ENCODE measurements at regions of chr4 and their contacts with region 1.

Region 1: DNA sequence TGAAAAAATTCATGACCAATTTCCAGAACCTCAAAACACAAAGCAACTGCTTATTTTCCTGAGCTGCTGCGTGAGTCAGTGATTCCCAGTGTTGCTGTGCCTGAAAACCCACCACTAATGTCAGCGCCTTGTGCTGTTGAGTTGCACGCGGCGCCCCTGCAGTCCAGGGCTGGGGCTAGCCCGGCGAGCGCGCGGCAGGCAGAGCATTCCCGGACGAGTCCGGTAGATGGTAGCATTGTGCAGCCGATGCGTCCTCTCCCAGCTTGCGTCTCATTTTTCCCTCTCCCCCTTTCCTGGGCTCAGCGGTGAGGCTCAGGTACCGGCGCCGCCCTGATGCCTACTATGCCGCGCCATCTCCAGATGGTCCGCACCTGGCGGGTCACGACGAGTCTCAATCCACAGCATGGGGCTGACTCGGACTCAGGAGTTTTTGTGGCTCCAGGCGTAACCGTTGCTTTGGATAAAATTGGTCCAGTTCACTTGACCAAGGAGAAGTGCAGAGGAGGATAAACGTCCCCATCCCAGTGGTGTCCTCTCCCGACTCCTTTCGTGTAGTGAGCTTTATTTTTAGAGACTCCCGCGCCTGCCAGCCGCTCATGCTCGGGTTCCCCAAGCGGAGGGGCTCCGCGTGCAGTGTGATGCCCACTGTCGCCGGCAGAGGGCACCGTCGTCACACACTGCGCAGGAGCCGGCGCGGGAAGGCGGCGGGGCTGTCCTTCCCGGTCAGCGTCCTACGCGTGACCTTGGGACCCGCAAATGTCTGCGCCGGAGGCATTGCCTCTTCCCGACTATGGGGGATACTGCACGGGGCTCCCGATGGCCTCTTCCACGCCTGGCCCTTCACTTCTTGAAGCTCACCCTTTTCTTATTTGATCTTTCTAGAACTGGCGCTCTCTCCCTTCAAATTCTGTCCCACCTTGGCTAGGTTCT is 53.6 kb upstream of the IGFBP7 start:
- DNase-seq: peak; percentile 78 to 88
- H3K4me3 ChIP-seq: peak overlapping the region; percentile 69
- H3K4me3 Mint-ChIP-seq: peak overlapping the region; percentile 87
- H3K27ac Mint-ChIP-seq: no peak overlapping the region
- H3K4me1 ChIP-seq: no peaks in the 10 kb centered on the region
- H3K4me1 Mint-ChIP-seq: peaks cover 8% of the 10 kb centered on the region
- H3K27me3 ChIP-seq: no peaks in the 10 kb centered on the region
- H3K27me3 Mint-ChIP-seq: peaks cover 24% of the 10 kb centered on the region
- CTCF ChIP-seq: peak; percentile 86 to 90

Region 2: DNA sequence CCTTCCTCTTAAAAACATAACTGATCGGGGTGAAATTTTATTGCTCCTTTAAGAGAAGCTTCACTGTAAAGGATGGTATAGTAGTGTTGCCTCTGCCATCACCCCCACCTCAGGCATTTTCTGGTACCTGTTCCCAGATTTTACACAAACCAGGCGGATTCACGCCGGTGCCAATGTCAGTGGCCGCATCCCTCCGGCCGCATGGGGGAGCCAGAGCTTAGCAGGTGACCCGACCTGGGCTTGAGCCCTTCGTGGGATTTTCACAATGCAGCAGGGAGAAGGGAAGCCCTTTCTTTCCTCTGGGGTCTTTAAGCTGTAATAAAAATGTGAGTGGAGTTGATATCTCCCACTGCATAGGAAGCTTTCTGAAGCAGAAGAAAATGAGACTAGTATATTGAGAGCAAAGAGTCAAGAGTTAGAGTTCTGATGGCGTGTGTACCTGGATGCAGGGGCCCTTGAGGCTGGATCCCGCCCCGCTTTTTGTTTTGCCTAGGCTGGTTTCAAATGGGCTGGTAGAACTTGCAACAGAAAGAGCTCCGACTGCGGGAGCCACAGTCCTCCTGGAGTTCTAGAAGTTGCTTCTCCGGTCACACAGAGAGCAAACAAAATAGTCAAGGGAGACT is 125.7 kb before region 1 on chr4:
- CTCF ChIA-PET with region 1: interaction called, 20 read pairs
- POLR2A ChIA-PET with region 1: no interaction called
- intact Hi-C with region 1: loop called (anchors 1 kb)
- DNase-seq: peak; percentile 69 to 84
- H3K4me3 ChIP-seq: no peak overlapping the region
- H3K4me3 Mint-ChIP-seq: no peak overlapping the region
- H3K27ac Mint-ChIP-seq: no peak overlapping the region
- H3K4me1 ChIP-seq: no peaks in the 10 kb centered on the region; the same call in 1 of the 2 replicates
- H3K4me1 Mint-ChIP-seq: peaks cover 13% of the 10 kb centered on the region
- H3K27me3 ChIP-seq: no peaks in the 10 kb centered on the region
- H3K27me3 Mint-ChIP-seq: no peaks in the 10 kb centered on the region
- CTCF ChIP-seq: peak; percentile 91 to 97

Region 3: DNA sequence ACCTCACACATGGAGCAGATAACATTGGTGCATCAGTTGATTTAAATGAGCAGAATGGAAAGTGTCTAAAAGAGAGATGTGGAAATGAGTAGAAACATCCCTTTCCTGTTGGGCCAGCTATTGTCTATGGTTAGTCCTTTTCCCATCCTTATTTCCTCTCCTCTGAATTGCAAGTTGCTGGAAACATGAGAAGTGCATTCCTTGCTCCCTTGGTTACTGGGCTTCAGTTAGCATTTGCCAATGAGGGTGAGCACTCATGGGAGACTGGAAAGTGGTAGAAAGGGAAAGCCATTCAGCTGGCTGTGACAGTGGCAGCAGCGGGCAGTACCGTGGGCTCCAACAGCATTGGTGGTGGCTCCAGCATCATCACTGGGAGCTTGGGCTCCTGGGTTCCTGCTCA is 42.4 kb after region 1 on chr4:
- CTCF ChIA-PET with region 1: no interaction called
- POLR2A ChIA-PET with region 1: no interaction called
- intact Hi-C with region 1: loop called (anchors 5 kb)
- DNase-seq: no peak
- H3K4me3 ChIP-seq: no peak overlapping the region
- H3K4me3 Mint-ChIP-seq: no peak overlapping the region
- H3K27ac Mint-ChIP-seq: no peak overlapping the region
- H3K4me1 ChIP-seq: no peaks in the 10 kb centered on the region
- H3K4me1 Mint-ChIP-seq: no peaks in the 10 kb centered on the region
- H3K27me3 ChIP-seq: no peaks in the 10 kb centered on the region
- H3K27me3 Mint-ChIP-seq: peaks cover 11% of the 10 kb centered on the region
- CTCF ChIP-seq: no peak

Region 4: GRCh38 chr4:57360681-57361080 is 196.9 kb after region 1 on chr4:
- CTCF ChIA-PET with region 1: no interaction called
- POLR2A ChIA-PET with region 1: no interaction called
- intact Hi-C with region 1: loop called (anchors 1 kb)
- DNase-seq: no peak
- H3K4me3 ChIP-seq: no peak overlapping the region
- H3K4me3 Mint-ChIP-seq: no peak overlapping the region
- H3K27ac Mint-ChIP-seq: no peak overlapping the region
- H3K4me1 ChIP-seq: no peaks in the 10 kb centered on the region
- H3K4me1 Mint-ChIP-seq: no peaks in the 10 kb centered on the region
- H3K27me3 ChIP-seq: no peaks in the 10 kb centered on the region
- H3K27me3 Mint-ChIP-seq: peaks cover 6% of the 10 kb centered on the region
- CTCF ChIP-seq: no peak

Region 5: GRCh38 chr4:57462843-57463242 is 299.0 kb after region 1 on chr4:
- CTCF ChIA-PET with region 1: no interaction called
- POLR2A ChIA-PET with region 1: no interaction called
- intact Hi-C with region 1: no loop called
- DNase-seq: peak in 1 of 2 experiments; percentile 14
- H3K4me3 ChIP-seq: no peak overlapping the region
- H3K4me3 Mint-ChIP-seq: no peak overlapping the region
- H3K27ac Mint-ChIP-seq: no peak overlapping the region
- H3K4me1 ChIP-seq: peaks cover 5% of the 10 kb centered on the region; the same call in 1 of the 2 replicates
- H3K4me1 Mint-ChIP-seq: no peaks in the 10 kb centered on the region
- H3K27me3 ChIP-seq: no peaks in the 10 kb centered on the region
- H3K27me3 Mint-ChIP-seq: no peaks in the 10 kb centered on the region
- CTCF ChIP-seq: no peak

Region 6: DNA sequence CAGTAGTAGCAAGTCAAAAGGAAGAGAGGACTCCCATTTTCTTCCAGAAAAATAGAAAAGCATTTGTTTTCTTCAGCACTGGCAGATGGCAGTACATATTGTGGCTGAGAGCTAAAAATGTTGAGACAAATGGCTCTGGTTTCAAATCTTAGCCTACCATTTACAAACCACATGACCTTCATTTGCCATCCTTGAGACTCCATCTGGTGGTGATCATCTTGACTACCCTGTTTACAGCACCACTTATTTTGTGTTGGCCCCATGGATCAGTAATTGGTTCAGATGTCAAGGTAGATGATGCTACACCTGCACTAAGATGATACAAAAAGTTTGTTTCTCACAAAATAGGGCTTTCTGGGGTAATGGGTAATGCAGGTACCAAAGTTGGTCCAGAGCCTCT is 898.2 kb after region 1 on chr4:
- CTCF ChIA-PET with region 1: no interaction called
- POLR2A ChIA-PET with region 1: no interaction called
- intact Hi-C with region 1: loop called (anchors 5 kb)
- DNase-seq: no peak
- H3K4me3 ChIP-seq: no peak overlapping the region
- H3K4me3 Mint-ChIP-seq: no peak overlapping the region
- H3K27ac Mint-ChIP-seq: peak overlapping the region; percentile 25
- H3K4me1 ChIP-seq: no peaks in the 10 kb centered on the region
- H3K4me1 Mint-ChIP-seq: no peaks in the 10 kb centered on the region
- H3K27me3 ChIP-seq: no peaks in the 10 kb centered on the region
- H3K27me3 Mint-ChIP-seq: no peaks in the 10 kb centered on the region
- CTCF ChIP-seq: no peak

Measured in Caco-2 (cell line).